ENCODE measurements at regions of chr19 and their contacts with region 1.

Region 1: GRCh38 chr19:28324275-28325060 is 888.5 kb downstream of the UQCRFS1 start:
- DNase-seq: no peak
- ATAC-seq: no peak
- H3K4me3 ChIP-seq: no peak overlapping the region
- H3K27ac ChIP-seq: no peak overlapping the region
- H3K4me1 ChIP-seq: no peaks in the 10 kb centered on the region
- H3K27me3 ChIP-seq: no peaks in the 10 kb centered on the region
- CTCF ChIP-seq: no peak
- POLR2A ChIP-seq: no peak

Region 2: GRCh38 chr19:27966390-27966816 is 358.1 kb before region 1 on chr19:
- in situ Hi-C with region 1: loop called in 1 of 4 experiments (anchors 10 kb)
- intact Hi-C with region 1: no loop called
- DNase-seq: no peak
- ATAC-seq: no peak
- H3K4me3 ChIP-seq: no peak overlapping the region
- H3K27ac ChIP-seq: no peak overlapping the region
- H3K4me1 ChIP-seq: no peaks in the 10 kb centered on the region
- H3K27me3 ChIP-seq: no peaks in the 10 kb centered on the region
- CTCF ChIP-seq: peak in 3 of 5 experiments; percentile 12 to 38 (median 24)
- POLR2A ChIP-seq: no peak

Region 3: DNA sequence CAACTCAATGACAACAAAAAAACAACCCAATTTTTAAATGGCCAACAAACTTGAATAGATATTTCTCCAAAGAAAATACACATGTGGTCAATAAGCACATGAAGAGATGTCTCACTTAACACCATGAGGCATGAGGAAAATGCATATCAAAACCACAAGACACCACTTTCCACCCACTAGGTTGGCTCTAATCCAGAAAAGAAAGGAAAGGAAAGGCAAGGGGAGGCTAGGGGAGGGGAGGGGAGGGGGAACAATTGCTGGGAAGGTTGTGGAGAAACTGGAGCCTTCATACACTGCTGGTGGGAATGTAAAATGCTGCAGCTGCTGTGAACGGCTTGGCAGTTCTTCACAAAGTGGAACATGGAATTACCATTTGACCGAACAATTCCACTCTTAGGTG is 34.2 kb after region 1 on chr19:
- in situ Hi-C with region 1: no loop called
- intact Hi-C with region 1: no loop called
- DNase-seq: no peak
- ATAC-seq: no peak
- H3K4me3 ChIP-seq: no peak overlapping the region
- H3K27ac ChIP-seq: no peak overlapping the region
- H3K4me1 ChIP-seq: no peaks in the 10 kb centered on the region
- H3K27me3 ChIP-seq: no peaks in the 10 kb centered on the region
- CTCF ChIP-seq: no peak
- POLR2A ChIP-seq: no peak